Activated CD4-positive, alpha-beta T cell treated with anti-CD3 and anti-CD28 coated beads for 36 hours (primary cell): ENCODE measurements at regions of chr3 and their contacts with region 1.

Region 1: DNA sequence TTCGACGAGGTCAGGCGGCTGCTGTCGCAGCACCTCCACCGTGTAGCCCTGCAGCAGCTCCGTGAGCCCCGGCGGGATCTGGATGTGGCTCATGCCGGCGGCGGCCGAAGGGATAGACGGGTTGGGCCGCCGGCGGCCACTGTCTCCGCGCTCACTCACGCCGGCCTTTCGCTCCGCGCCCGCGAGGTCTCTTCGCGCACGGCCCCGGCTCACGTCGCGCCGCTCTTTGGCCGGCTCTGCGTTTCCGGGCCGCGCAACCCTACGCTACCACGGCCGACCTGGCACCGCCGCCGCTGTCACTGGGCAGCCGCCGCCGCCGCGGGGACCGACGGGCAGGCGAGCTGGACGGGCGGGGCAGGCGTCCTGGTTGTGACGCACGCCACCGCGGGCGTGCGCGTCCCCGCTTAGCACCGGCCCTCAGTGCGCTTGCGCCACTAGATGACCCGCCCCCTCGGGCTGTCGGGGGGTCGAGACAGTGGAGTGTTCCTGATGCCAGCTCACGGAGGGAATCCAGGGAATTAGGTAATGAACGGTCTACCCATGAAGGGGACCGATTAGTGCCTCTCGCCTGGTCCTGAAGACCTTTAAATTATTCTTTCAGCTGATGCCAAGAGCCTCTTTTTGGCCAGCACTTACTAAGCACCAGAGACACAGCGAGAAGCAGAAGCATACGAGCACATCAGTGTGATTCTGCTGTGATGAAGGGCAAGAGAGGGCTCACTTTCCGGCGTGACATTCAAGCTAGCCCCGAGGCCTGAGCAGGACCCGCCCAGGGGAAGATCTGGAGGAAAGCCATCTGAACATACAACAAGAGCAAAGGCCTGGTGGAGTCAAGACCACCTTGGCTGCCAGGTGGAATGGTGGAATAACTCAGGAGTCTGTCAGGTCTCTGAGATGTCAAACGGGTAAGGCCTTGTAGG is at the start of gene PRKAR2A:
- DNase-seq: peak; percentile 89
- ATAC-seq: peak; percentile 89
- H3K4me3 Mint-ChIP-seq: peak within 1 kb of the TSS; percentile 82
- H3K27ac Mint-ChIP-seq: peak within 1 kb of the TSS; percentile 87
- H3K4me1 Mint-ChIP-seq: peaks cover 26% of the 10 kb centered on the region
- H3K27me3 Mint-ChIP-seq: no peaks in the 10 kb centered on the region
- total RNA-seq, gene PRKAR2A: 28.7 to 35.2 TPM

Region 2: DNA sequence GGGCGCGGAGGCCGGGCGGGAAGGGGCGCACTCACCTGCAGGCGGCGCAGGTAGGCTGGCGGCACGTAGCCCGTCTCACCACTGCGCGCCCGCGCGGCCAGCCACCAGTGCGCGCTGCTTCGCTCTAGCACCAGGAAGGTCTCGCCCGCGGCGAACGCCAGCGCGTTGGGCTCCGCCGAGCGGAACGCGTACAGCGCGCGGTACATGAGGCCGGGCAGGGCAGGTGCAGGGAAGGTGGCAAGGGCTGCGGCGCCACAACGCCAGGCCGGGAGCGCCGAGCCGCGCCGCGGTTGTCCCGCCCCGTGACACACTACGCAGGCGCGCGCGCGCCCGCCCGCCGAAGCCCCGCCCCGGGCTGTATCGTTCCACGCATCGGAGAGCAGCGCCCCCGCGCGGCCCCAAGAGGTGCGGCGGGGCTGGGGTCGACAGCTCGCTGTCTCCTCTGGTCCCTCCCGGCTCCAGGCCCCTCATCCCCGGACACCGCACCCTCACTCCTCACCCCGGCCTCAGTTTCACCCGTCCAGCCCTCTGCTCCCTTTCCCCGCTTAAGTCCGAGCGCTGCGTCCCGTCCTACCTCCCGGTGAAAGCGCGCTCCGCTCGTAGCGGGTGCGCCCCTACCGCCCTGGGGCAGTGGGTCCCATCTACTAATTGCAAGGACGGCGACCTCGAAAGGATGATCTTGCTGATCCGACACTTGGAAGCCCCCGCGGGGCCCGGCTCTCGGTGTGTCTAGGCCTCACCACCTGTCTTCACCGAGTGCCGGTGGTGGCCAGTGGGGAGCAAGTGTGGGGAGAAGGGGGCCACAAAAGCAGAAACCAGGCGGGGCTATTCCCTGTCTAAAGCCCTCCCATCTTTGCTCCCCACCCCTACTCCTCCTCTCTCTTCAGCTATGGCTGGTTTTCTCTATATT is 161.9 kb before region 1 on chr3 and contains the start of gene NCKIPSD:
- CTCF ChIA-PET with region 1: no interaction called
- POLR2A ChIA-PET with region 1: no interaction called
- intact Hi-C with region 1: loop called in 1 of 2 experiments (anchors 1 kb)
- DNase-seq: peak; percentile 96
- ATAC-seq: peak; percentile 94
- H3K4me3 Mint-ChIP-seq: peak within 1 kb of the TSS; percentile 82
- H3K27ac Mint-ChIP-seq: peak within 1 kb of the TSS; percentile 68
- H3K4me1 Mint-ChIP-seq: peaks cover 16% of the 10 kb centered on the region
- H3K27me3 Mint-ChIP-seq: no peaks in the 10 kb centered on the region
- total RNA-seq, gene NCKIPSD: 61.0 to 67.3 TPM

Region 3: DNA sequence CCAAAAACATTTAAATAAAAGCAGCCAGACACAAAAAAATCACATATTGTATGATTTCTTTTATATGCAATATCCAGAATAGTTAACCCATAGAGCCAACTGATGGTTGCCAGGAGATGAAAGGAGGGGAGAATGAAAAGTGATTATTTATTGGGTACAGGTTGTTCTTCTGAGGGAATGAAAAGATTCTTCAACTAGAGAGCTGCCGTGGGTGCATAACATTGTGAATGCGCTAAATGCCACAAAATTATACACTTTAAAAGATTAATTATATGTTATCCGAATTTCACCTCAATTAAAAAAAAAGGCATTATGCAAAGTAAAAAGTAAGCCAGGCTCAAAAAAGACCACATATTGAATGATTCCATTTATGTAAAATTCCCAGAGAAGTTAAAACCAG is 36.2 kb before region 1 on chr3:
- CTCF ChIA-PET with region 1: no interaction called
- POLR2A ChIA-PET with region 1: no interaction called
- intact Hi-C with region 1: loop called in 1 of 2 experiments (anchors 2 kb)
- DNase-seq: no peak
- ATAC-seq: no peak
- H3K4me3 Mint-ChIP-seq: peak overlapping the region; percentile 18
- H3K27ac Mint-ChIP-seq: peak overlapping the region; percentile 77
- H3K4me1 Mint-ChIP-seq: peaks cover 32% of the 10 kb centered on the region
- H3K27me3 Mint-ChIP-seq: no peaks in the 10 kb centered on the region

Region 4: GRCh38 chr3:48898383-48899234 is 50.8 kb after region 1 on chr3 and contains the start of gene SLC25A20:
- CTCF ChIA-PET with region 1: interaction called, 3 read pairs
- POLR2A ChIA-PET with region 1: no interaction called
- intact Hi-C with region 1: loop called in 1 of 2 experiments (anchors 1 kb)
- DNase-seq: peak; percentile 96
- ATAC-seq: peak; percentile 96
- H3K4me3 Mint-ChIP-seq: peak within 1 kb of the TSS; percentile 90
- H3K27ac Mint-ChIP-seq: peak within 1 kb of the TSS; percentile 92
- H3K4me1 Mint-ChIP-seq: peaks cover 30% of the 10 kb centered on the region
- H3K27me3 Mint-ChIP-seq: no peaks in the 10 kb centered on the region
- total RNA-seq, gene SLC25A20: 15.8 to 18.5 TPM

Region 5: GRCh38 chr3:48952510-48953118 is 104.8 kb after region 1 on chr3:
- CTCF ChIA-PET with region 1: no interaction called
- POLR2A ChIA-PET with region 1: no interaction called
- intact Hi-C with region 1: no loop called
- DNase-seq: peak; percentile 68
- ATAC-seq: peak; percentile 58
- H3K4me3 Mint-ChIP-seq: no peak overlapping the region
- H3K27ac Mint-ChIP-seq: no peak overlapping the region
- H3K4me1 Mint-ChIP-seq: peaks cover 9% of the 10 kb centered on the region
- H3K27me3 Mint-ChIP-seq: no peaks in the 10 kb centered on the region

Region 6: GRCh38 chr3:48989796-48990635 is 142.3 kb after region 1 on chr3 and contains the start of gene P4HTM:
- CTCF ChIA-PET with region 1: no interaction called
- POLR2A ChIA-PET with region 1: no interaction called
- intact Hi-C with region 1: loop called in 1 of 2 experiments (anchors 5 kb)
- DNase-seq: peak; percentile 90
- ATAC-seq: peak; percentile 76
- H3K4me3 Mint-ChIP-seq: peak within 1 kb of the TSS; percentile 95
- H3K27ac Mint-ChIP-seq: peak within 1 kb of the TSS; percentile 93
- H3K4me1 Mint-ChIP-seq: peaks cover 35% of the 10 kb centered on the region
- H3K27me3 Mint-ChIP-seq: no peaks in the 10 kb centered on the region
- total RNA-seq, gene P4HTM: 25.7 to 30.4 TPM

Region 7: GRCh38 chr3:49028673-49029562 is 181.2 kb after region 1 on chr3 and contains the start of gene IMPDH2:
- CTCF ChIA-PET with region 1: no interaction called
- POLR2A ChIA-PET with region 1: no interaction called
- intact Hi-C with region 1: loop called in 1 of 2 experiments (anchors 2 kb)
- DNase-seq: peak; percentile 96
- ATAC-seq: peak; percentile 93
- H3K4me3 Mint-ChIP-seq: peak within 1 kb of the TSS; percentile 89
- H3K27ac Mint-ChIP-seq: peak within 1 kb of the TSS; percentile 97
- H3K4me1 Mint-ChIP-seq: peaks cover 53% of the 10 kb centered on the region
- H3K27me3 Mint-ChIP-seq: no peaks in the 10 kb centered on the region
- total RNA-seq, gene IMPDH2: 504 to 515 TPM